ENCODE measurements at regions of chr7 and their contacts with region 1.

Region 1: DNA sequence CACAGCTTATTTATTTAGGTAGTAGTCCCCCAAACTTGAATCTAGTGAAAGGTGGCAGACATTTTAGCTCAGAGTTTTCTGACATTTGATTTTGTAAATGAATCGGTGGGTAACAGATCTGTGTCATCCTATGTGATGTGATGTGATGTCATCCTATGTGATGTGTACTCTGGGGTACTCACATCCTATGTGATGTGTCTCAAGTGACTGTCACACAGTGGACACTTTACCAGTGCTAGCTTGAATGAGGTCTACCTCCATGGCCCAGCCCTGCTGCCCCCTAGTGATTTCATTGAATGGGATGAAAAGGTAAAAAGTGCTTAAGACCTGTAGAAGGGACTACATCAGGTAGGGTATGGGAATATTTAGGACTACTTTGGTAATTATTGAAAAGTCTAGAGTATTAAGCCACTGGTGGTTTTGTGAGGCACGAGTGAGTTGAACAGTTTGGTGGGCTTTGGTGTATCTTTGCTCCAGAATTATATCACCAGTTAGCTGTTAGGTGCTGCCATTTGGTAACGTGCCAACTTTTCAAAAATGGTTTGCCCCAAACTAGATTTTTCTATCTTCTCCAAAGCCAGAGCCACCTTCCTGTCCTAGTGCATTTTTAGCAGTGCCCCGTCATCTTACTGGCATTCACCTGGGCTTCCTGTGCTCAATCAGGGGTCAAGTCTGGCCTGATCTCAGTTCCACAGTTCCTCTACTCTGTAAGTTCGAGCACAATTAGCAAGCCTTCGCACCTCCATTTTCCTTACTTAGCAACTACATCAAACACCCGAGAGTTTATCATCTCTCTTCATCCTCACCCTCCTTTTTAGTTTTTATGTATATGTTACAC is 9.7 kb downstream of the EIF4H start:
- DNase-seq: no peak
- ATAC-seq: no peak
- H3K4me3 ChIP-seq: no peak overlapping the region
- H3K27ac ChIP-seq: no peak overlapping the region
- H3K4me1 ChIP-seq: peaks cover 31% of the 10 kb centered on the region
- H3K27me3 ChIP-seq: no peaks in the 10 kb centered on the region
- CTCF ChIP-seq: 0 out of 2 replicates have a peak, but pooled peaks have one; percentile 16
- POLR2A ChIP-seq: no peak
- RAD21 ChIP-seq: no peak

Region 2: GRCh38 chr7:73565675-73566340 is 618.0 kb before region 1 on chr7:
- CTCF ChIA-PET with region 1: no interaction called
- POLR2A ChIA-PET with region 1: no interaction called
- dilution Hi-C with region 1: no loop called
- in situ Hi-C with region 1: no loop called
- intact Hi-C with region 1: no loop called
- DNase-seq: no peak
- ATAC-seq: no peak
- H3K4me3 ChIP-seq: no peak overlapping the region
- H3K27ac ChIP-seq: no peak overlapping the region
- H3K4me1 ChIP-seq: 0 out of 2 replicates have a peak, but pooled peaks cover 2% of the 10 kb centered on the region
- H3K27me3 ChIP-seq: no peaks in the 10 kb centered on the region
- CTCF ChIP-seq: no peak
- POLR2A ChIP-seq: no peak
- RAD21 ChIP-seq: no peak

Region 3: GRCh38 chr7:73811760-73812168 is 372.1 kb before region 1 on chr7:
- CTCF ChIA-PET with region 1: no interaction called
- POLR2A ChIA-PET with region 1: no interaction called
- dilution Hi-C with region 1: no loop called
- in situ Hi-C with region 1: no loop called
- intact Hi-C with region 1: no loop called
- DNase-seq: peak; percentile 41
- ATAC-seq: peak; percentile 93
- H3K4me3 ChIP-seq: no peak overlapping the region
- H3K27ac ChIP-seq: no peak overlapping the region
- H3K4me1 ChIP-seq: 0 out of 2 replicates have a peak, but pooled peaks cover 2% of the 10 kb centered on the region
- H3K27me3 ChIP-seq: no peaks in the 10 kb centered on the region
- CTCF ChIP-seq: peak; percentile 71
- POLR2A ChIP-seq: no peak
- RAD21 ChIP-seq: peak; percentile 81

Region 4: DNA sequence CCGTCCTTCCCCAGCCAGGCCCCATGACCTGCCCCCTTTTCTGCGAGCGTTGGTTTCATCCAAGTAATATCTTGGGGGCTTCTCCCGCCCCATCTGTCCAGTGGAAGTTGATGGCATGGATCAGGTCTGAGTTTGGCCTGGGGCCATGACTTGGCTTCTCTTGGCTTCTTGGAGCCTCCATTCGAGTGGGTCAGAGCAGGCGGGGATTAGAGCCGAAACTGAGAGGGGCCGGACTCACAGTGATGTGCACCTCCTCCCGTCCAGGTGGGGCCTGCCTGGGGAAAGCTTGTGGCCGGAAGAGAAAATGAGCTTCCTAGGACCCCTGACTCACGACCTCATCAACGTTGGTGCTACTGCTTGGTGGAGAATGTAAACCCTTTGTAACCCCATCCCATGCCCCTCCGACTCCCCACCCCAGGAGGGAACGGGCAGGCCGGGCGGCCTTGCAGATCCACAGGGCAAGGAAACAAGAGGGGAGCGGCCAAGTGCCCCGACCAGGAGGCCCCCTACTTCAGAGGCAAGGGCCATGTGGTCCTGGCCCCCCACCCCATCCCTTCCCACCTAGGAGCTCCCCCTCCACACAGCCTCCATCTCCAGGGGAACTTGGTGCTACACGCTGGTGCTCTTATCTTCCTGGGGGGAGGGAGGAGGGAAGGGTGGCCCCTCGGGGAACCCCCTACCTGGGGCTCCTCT is 115.3 kb before region 1 on chr7:
- CTCF ChIA-PET with region 1: interaction called, 3 read pairs
- POLR2A ChIA-PET with region 1: no interaction called
- dilution Hi-C with region 1: no loop called
- in situ Hi-C with region 1: no loop called
- intact Hi-C with region 1: loop called (anchors 5 kb)
- DNase-seq: no peak
- ATAC-seq: no peak
- H3K4me3 ChIP-seq: no peak overlapping the region
- H3K27ac ChIP-seq: no peak overlapping the region
- H3K4me1 ChIP-seq: no peaks in the 10 kb centered on the region
- H3K27me3 ChIP-seq: no peaks in the 10 kb centered on the region
- CTCF ChIP-seq: no peak
- POLR2A ChIP-seq: no peak
- RAD21 ChIP-seq: no peak

Measured in IMR-90 (cell line).